ENCODE measurements at regions of chr12 and their contacts with region 1.

Region 1: GRCh38 chr12:68865399-68866164 is 57.6 kb downstream of the MDM2 start:
- DNase-seq: no peak
- H3K4me3 ChIP-seq: no peak overlapping the region
- H3K27ac ChIP-seq: no peak overlapping the region
- H3K4me1 ChIP-seq: no peaks in the 10 kb centered on the region
- H3K27me3 ChIP-seq: no peaks in the 10 kb centered on the region
- CTCF ChIP-seq: no peak

Region 2: DNA sequence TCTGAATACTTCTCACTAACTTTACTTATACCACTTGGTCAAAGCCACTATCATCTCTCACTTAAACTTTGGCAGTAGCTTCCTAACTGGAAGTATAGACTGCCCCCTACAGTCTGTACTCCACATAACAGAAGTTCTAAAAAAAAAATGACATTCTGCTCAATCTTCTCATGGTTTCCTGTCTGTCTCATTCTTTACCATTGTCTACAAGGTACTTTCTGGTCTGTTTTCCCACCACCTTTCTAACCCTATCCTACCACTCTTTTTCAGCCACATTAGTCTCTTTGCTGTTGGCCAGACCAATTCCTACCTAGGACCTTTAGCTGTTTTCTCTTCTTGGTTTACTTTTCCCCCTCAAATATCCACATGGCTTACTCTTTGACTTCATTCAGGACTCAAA is 388.5 kb after region 1 on chr12:
- CTCF ChIA-PET with region 1: no interaction called
- POLR2A ChIA-PET with region 1: no interaction called
- intact Hi-C with region 1: loop called (anchors 5 kb)
- DNase-seq: peak in 1 of 2 experiments; percentile 36
- H3K4me3 ChIP-seq: no peak overlapping the region
- H3K27ac ChIP-seq: no peak overlapping the region
- H3K4me1 ChIP-seq: no peaks in the 10 kb centered on the region
- H3K27me3 ChIP-seq: no peaks in the 10 kb centered on the region
- CTCF ChIP-seq: peak; percentile 81

Measured in PC-9 (cell line).